Dorsolateral prefrontal cortex (tissue), 120 donors: ENCODE measurements at regions of chr1 and their contacts with region 1.

Region 1: DNA sequence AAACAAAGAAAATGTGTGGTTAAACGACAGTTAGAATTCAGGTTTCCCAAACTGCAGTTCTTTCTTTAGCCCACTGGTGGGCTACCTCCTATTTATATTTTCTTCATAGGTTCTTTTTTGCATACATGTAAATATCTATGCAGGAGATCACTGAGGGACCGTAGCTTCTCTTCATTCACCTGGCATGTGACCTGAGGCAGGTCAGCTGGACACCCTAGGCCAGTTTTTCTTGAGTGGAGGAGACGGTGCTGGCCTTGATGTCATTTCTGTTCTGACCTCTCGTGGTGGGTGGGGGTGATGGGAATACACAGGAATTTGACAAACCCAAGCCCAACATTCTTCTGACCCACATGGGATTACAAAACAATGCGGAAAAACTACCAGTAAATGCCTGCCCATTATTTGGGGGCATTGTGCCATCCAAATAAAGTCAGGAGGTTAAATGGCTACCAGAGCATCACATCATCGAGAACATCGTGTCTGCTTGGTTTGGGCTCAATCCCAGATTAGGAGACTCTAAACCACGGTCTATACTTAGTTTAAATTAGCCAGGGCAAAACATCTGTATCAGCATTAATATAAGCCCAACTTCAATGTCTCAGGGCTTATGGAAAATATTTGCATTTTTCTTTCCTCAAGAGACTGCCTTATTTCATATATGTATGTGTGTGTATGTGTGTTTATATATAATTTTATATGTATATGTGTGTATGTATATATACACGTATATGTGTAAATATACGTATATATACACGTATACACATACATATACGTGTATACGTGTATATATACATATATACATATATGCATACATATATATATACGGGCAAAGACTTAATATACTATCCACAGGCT is 7.4 kb upstream of the IRF2BP2 start:
- DNase-seq: no peak
- H3K4me3 ChIP-seq: no peak overlapping the region
- H3K27ac ChIP-seq: peak overlapping the region in 8 of 59 donors; percentile 9 to 59 (median 36)
- H3K27me3 ChIP-seq: no peaks in the 10 kb centered on the region
- CTCF ChIP-seq: peak in 7 of 56 donors; percentile 6 to 28 (median 17)

Region 2: DNA sequence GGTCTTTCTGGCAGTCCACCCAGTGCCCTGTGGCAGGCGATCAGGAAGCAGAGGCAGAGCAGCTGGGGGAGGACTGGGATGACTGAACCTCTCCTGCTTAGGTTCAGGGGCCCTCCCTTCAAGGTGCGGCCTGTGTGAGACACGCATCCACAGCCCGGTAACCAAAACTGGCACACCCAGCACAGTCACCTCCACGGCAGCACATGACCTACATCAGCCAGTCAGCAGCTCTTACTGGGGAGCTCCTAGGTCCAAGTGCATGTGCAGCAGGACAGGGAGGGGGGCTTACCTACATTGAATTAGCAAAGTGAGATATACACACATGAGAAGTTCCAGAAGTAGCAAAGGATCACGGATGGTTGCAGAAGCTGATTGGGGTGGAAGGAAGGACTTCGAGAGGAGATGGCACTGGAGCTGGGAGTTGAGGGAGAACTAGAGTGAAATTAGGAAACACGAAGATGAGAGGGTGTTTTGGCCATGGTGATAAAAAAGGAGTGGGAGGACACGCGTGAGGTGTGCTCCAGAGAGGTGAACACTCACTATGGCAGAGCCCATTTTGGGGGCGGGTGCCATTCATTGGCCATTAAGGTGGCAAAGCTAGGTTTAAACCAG is 44.1 kb after region 1 on chr1:
- intact Hi-C with region 1: loop called in 1 of 2 experiments (anchors 5 kb)
- DNase-seq: no peak
- H3K4me3 ChIP-seq: no peak overlapping the region
- H3K27ac ChIP-seq: no peak overlapping the region
- H3K27me3 ChIP-seq: no peaks in the 10 kb centered on the region
- CTCF ChIP-seq: no peak

Region 3: GRCh38 chr1:234709473-234710228 is 92.3 kb after region 1 on chr1:
- intact Hi-C with region 1: no loop called
- DNase-seq: peak in 1 of 10 donors; percentile 69
- H3K4me3 ChIP-seq: no peak overlapping the region
- H3K27ac ChIP-seq: peak overlapping the region in 1 of 59 donors; percentile 76
- H3K27me3 ChIP-seq: no peaks in the 10 kb centered on the region
- CTCF ChIP-seq: no peak

Region 4: GRCh38 chr1:234833646-234834045 is 216.3 kb after region 1 on chr1:
- intact Hi-C with region 1: loop called in 1 of 2 experiments (anchors 5 kb)
- DNase-seq: no peak
- H3K4me3 ChIP-seq: no peak overlapping the region
- H3K27ac ChIP-seq: no peak overlapping the region
- H3K27me3 ChIP-seq: no peaks in the 10 kb centered on the region
- CTCF ChIP-seq: no peak